Endothelial cell of umbilical vein (primary cell): ENCODE measurements at regions of chrX and their contacts with region 1.

Region 1: GRCh38 chrX:85111347-85111746 is 107.7 kb downstream of the APOOL start:
- DNase-seq: peak; percentile 4
- H3K4me3 ChIP-seq: no peak overlapping the region
- H3K27ac ChIP-seq: no peak overlapping the region
- H3K4me1 ChIP-seq: no peaks in the 10 kb centered on the region
- H3K27me3 ChIP-seq: no peaks in the 10 kb centered on the region
- CTCF ChIP-seq: peak; percentile 22 to 30
- POLR2A ChIP-seq: no peak

Region 2: DNA sequence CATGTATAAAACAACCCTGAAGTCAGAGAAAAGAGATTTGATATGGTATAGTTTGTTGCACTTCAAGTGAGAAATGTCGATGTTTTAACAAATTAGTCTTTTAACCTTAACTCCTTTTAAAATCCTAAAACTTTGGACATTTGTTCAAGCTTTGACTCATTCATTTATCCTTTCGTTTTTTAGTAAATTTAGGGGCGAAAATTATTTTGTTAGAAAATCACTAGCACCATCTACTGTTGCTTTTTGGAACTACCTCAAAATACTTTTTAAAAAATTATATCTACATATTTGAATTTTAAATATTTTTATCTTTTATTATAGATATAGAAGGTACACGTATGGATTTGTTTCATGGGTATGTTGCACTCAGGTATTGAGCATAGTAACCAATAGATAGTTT is 433.3 kb after region 1 on chrX:
- CTCF ChIA-PET with region 1: interaction called, 40 read pairs
- POLR2A ChIA-PET with region 1: no interaction called
- dilution Hi-C with region 1: no loop called
- intact Hi-C with region 1: loop called (anchors 1 kb)
- DNase-seq: no peak
- H3K4me3 ChIP-seq: no peak overlapping the region
- H3K27ac ChIP-seq: no peak overlapping the region
- H3K4me1 ChIP-seq: no peaks in the 10 kb centered on the region
- H3K27me3 ChIP-seq: no peaks in the 10 kb centered on the region
- CTCF ChIP-seq: peak in 1 of 2 donors; percentile 7
- POLR2A ChIP-seq: no peak